Calu3 (cell line): ENCODE measurements at regions of chr2 and their contacts with region 1.

Region 1: DNA sequence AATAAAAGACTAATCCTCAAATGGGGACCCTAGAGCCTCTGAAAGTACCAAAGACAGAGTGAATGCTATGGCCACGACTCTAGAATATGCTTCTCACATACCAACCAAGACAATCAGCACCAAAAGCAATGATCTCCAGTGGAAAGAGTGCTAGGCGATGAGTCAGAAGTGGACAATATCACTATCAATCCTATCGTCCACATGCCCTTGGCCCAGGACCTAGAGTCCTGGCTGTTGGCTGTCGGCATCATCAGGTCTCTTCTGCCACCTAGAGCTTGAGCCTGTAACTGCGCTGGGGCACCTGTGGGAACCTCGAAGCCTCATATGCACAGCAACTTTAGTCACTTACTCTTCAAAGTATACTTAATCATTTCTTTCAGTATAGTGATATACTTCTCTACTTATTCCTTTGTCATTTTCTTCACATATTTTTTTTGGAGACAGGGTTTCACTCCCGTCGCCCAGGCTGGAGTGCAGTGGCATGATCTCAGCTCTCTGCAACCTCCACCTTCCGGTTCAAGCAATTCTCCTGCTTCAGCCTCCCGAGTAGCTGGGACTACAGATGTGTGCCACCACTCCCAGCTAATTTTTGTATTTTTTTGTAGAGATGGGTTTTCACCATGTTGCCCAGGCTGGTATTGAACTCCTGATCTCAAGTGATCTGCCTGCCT is 29.7 kb downstream of the NOL10 start:
- DNase-seq: peak; percentile 64
- H3K4me3 Mint-ChIP-seq: no peak overlapping the region
- H3K27ac Mint-ChIP-seq: no peak overlapping the region
- H3K4me1 Mint-ChIP-seq: peaks cover 8% of the 10 kb centered on the region
- H3K27me3 Mint-ChIP-seq: no peaks in the 10 kb centered on the region
- CTCF ChIP-seq: peak; percentile 78

Region 2: DNA sequence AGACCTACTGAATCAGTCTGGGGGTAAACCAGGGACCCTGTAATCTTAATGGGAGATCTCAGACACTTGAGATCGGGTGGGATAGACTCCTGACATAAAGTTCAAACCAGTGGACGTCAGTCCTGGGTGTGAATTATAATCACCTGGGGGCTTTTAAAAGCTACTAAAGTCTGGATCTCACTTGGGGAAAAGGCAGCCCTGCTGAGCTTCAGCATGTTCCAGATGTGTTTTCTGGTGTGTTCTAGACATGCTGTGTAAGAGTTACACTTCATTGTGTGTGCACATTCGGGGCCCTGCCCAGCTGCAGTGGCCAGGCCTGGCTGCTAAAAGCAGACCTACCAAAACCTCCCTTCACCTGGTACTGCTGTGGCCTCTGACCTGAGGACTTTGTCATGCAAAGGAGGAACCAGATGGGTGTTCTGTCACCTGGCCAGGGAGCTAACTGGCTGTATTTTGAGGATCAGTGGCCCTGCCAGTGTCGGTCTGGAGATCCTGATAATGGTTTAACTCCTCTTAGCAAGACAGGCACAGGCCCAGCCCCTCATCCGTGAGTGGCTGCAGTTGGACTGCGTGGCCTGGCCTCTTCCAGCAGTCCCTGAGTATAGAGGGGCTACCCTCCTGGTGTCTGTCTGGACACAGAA is 526.9 kb before region 1 on chr2:
- CTCF ChIA-PET with region 1: no interaction called
- intact Hi-C with region 1: loop called (anchors 5 kb)
- DNase-seq: no peak
- H3K4me3 Mint-ChIP-seq: no peak overlapping the region
- H3K27ac Mint-ChIP-seq: no peak overlapping the region
- H3K4me1 Mint-ChIP-seq: peaks cover 44% of the 10 kb centered on the region
- H3K27me3 Mint-ChIP-seq: no peaks in the 10 kb centered on the region
- CTCF ChIP-seq: no peak